ENCODE measurements at regions of chrX and their contacts with region 1.

Region 1: DNA sequence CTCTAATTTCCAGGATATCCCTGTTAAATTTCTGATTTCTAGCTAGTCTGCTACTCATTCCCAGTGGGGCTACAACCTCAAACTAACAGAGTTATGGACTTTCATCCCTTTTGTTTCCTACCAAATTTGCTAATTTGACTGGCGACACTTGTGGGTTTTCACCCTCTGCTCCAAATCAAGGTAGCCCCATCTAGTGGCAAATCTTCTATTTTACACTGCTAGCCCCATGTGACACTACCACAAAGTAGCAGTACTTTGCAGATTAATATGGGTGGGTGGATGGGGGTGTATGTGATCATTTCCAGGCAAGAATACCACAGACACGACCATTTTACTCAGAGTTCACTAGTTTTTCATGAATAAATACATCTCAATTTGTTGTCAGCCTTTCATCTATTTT is 150.3 kb downstream of the MSL3 start:
- DNase-seq: peak; percentile 25
- ATAC-seq: peak; percentile 99
- H3K4me3 ChIP-seq: no peak overlapping the region
- H3K27ac ChIP-seq: no peak overlapping the region
- H3K4me1 ChIP-seq: no peaks in the 10 kb centered on the region
- H3K27me3 ChIP-seq: no peaks in the 10 kb centered on the region
- CTCF ChIP-seq: peak; percentile 54 to 70 (median 56)
- EP300 ChIP-seq: no peak
- POLR2A ChIP-seq: no peak
- RAD21 ChIP-seq: peak; percentile 71

Region 2: GRCh38 chrX:11724122-11725017 is 184.0 kb before region 1 on chrX:
- CTCF ChIA-PET with region 1: interaction called, 4 read pairs
- POLR2A ChIA-PET with region 1: no interaction called
- RAD21 ChIA-PET with region 1: no interaction called
- SMC1A ChIA-PET with region 1: no interaction called
- in situ Hi-C with region 1: no loop called
- intact Hi-C with region 1: loop called (anchors 1 kb)
- DNase-seq: no peak
- ATAC-seq: peak; percentile 85
- H3K4me3 ChIP-seq: no peak overlapping the region
- H3K27ac ChIP-seq: no peak overlapping the region
- H3K4me1 ChIP-seq: no peaks in the 10 kb centered on the region
- H3K27me3 ChIP-seq: no peaks in the 10 kb centered on the region
- CTCF ChIP-seq: peak; percentile 63 to 68 (median 64)
- EP300 ChIP-seq: no peak
- POLR2A ChIP-seq: no peak
- RAD21 ChIP-seq: peak; percentile 64

Region 3: DNA sequence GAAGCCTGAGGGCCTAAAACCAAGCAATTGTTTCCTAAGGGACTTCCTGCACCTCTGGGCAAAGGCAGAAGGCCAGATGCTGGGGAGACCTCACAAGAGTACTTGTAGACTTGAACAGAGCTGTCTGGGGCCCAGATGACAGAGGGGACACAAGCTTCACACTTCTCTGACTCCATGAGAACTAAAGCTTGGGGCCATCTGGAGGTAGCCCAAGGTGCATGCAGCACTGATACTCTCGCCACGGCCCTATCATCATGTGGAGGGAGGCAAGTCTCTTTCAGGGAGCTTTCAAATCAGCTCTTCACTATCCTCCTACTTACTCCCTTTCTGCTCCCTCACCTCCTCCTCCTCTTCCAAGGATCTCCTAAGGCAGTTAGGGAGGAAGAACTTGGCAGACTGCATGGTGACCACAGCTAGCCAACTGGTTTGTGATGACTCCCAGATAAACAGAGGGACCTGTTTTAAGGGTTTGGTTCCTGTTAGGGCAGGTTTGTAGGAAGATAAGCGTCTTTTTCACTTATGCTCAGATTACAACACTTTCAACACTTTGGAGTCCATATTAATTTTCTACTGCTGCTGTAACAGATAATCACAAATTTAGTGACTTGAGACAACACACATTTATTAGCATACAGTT is 126.5 kb before region 1 on chrX:
- CTCF ChIA-PET with region 1: interaction called, 8 read pairs
- POLR2A ChIA-PET with region 1: no interaction called
- RAD21 ChIA-PET with region 1: interaction called, 6 read pairs
- SMC1A ChIA-PET with region 1: interaction called, 16 read pairs
- in situ Hi-C with region 1: loop called (anchors 5 kb)
- intact Hi-C with region 1: loop called (anchors 1 kb)
- DNase-seq: no peak
- ATAC-seq: peak; percentile 42
- H3K4me3 ChIP-seq: no peak overlapping the region
- H3K27ac ChIP-seq: no peak overlapping the region
- H3K4me1 ChIP-seq: no peaks in the 10 kb centered on the region
- H3K27me3 ChIP-seq: no peaks in the 10 kb centered on the region
- CTCF ChIP-seq: no peak
- EP300 ChIP-seq: no peak
- POLR2A ChIP-seq: no peak
- RAD21 ChIP-seq: no peak

Region 4: GRCh38 chrX:11787564-11787963 is 120.8 kb before region 1 on chrX:
- CTCF ChIA-PET with region 1: interaction called, 8 read pairs
- POLR2A ChIA-PET with region 1: no interaction called
- RAD21 ChIA-PET with region 1: interaction called, 14 read pairs
- SMC1A ChIA-PET with region 1: interaction called, 15 read pairs
- in situ Hi-C with region 1: loop called (anchors 5 kb)
- intact Hi-C with region 1: loop called (anchors 1 kb)
- DNase-seq: no peak
- ATAC-seq: no peak
- H3K4me3 ChIP-seq: no peak overlapping the region
- H3K27ac ChIP-seq: no peak overlapping the region
- H3K4me1 ChIP-seq: peaks cover 20% of the 10 kb centered on the region
- H3K27me3 ChIP-seq: no peaks in the 10 kb centered on the region
- CTCF ChIP-seq: peak; percentile 22 to 60 (median 33); a peak in 5 of 6 replicates
- EP300 ChIP-seq: no peak
- POLR2A ChIP-seq: no peak
- RAD21 ChIP-seq: peak; percentile 46

Region 5: GRCh38 chrX:11941571-11941970 is 33.2 kb after region 1 on chrX:
- CTCF ChIA-PET with region 1: no interaction called
- POLR2A ChIA-PET with region 1: no interaction called
- RAD21 ChIA-PET with region 1: no interaction called
- SMC1A ChIA-PET with region 1: no interaction called
- in situ Hi-C with region 1: no loop called
- intact Hi-C with region 1: no loop called
- DNase-seq: no peak
- ATAC-seq: no peak
- H3K4me3 ChIP-seq: no peak overlapping the region
- H3K27ac ChIP-seq: no peak overlapping the region
- H3K4me1 ChIP-seq: no peaks in the 10 kb centered on the region
- H3K27me3 ChIP-seq: no peaks in the 10 kb centered on the region; a peak in 1 of 4 replicates
- CTCF ChIP-seq: no peak
- EP300 ChIP-seq: no peak
- POLR2A ChIP-seq: no peak
- RAD21 ChIP-seq: no peak

Region 6: DNA sequence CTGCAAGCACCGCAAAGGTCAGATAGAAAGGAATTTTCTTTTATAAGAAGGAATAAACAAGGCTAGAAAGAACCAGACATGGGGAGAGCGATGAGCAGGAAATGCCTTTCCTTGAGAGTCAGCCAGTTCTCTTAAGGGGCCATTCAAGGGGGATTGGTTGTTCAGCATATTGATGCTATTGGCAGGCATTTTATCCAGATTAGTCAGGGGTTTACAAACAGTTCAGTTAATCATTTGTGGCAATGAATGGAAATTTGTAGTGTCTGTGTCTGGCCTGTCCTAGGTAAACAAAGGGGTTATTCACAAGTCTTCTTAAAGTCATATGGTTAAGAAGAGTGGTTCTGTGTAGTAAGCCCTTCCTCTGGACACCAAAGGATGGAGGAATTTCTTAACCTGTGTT is 45.2 kb after region 1 on chrX:
- CTCF ChIA-PET with region 1: no interaction called
- POLR2A ChIA-PET with region 1: no interaction called
- RAD21 ChIA-PET with region 1: no interaction called
- SMC1A ChIA-PET with region 1: no interaction called
- in situ Hi-C with region 1: no loop called
- intact Hi-C with region 1: no loop called
- DNase-seq: no peak
- ATAC-seq: no peak; the same call in 2 of the 3 replicates
- H3K4me3 ChIP-seq: no peak overlapping the region
- H3K27ac ChIP-seq: no peak overlapping the region
- H3K4me1 ChIP-seq: no peaks in the 10 kb centered on the region
- H3K27me3 ChIP-seq: no peaks in the 10 kb centered on the region
- CTCF ChIP-seq: no peak
- EP300 ChIP-seq: no peak
- POLR2A ChIP-seq: no peak
- RAD21 ChIP-seq: no peak

Measured in GM12878 (cell line).